ENCODE measurements at regions of chr9 and their contacts with region 1.

Region 1: DNA sequence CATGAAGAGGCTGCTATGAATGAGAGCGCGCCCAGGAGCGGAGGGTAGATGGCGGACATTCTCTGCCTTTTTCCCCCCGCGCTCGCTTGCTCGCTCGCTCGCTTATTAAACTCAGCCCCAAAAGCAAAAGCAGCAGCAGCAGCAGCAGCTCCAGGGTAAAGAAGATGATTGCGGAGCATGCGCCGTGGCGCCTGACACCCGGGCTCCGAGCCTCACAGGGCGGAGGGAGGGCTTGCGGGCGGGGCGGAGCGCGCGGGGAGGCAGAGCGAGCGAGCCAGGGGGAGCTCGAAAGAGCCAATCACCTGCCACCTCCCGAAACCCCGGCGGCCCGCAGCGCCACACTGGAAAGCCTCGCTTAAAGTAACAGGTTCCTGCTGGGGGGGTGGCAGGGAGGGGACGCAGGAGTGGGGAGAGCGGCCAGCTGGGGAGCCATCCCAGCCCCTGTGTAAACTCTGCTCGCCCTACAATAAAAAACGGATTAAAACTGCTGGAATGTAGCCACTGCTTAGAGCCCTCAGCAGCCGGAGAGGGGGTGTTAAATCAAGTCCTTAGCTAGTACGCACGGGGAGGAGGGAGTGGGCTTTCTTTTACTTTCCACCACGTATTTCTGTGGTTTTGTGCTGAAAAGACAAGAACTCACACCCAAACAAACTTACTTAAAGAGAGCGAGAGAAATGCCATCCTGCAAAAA is at the start of gene MLLT3:
- DNase-seq: peak; percentile 97
- ATAC-seq: peak; percentile 98
- total RNA-seq, gene MLLT3: 19.3 TPM

Region 2: GRCh38 chr9:20356403-20357035 is 266.0 kb before region 1 on chr9:
- intact Hi-C with region 1: loop called (anchors 5 kb)
- DNase-seq: peak; percentile 66
- ATAC-seq: peak; percentile 89

Region 3: GRCh38 chr9:20684035-20684872 is 61.8 kb after region 1 on chr9 and contains the start of gene FOCAD:
- intact Hi-C with region 1: loop called (anchors 10 kb)
- DNase-seq: peak; percentile 97
- ATAC-seq: peak; percentile 99
- total RNA-seq, gene FOCAD: 22.5 TPM